ENCODE measurements at regions of chr4 and their contacts with region 1.

Region 1: GRCh38 chr4:159175085-159175988 is 72.5 kb downstream of the RAPGEF2 start:
- DNase-seq: peak; percentile 89
- ATAC-seq: peak; percentile 88
- H3K4me3 ChIP-seq: peak overlapping the region; percentile 66
- H3K27ac ChIP-seq: peak overlapping the region; percentile 65
- H3K4me1 ChIP-seq: peaks cover 30% of the 10 kb centered on the region
- H3K27me3 ChIP-seq: no peaks in the 10 kb centered on the region
- CTCF ChIP-seq: peak; percentile 86

Region 2: GRCh38 chr4:158729716-158730559 is 445.4 kb before region 1 on chr4:
- CTCF ChIA-PET with region 1: no interaction called
- POLR2A ChIA-PET with region 1: no interaction called
- intact Hi-C with region 1: loop called (anchors 1 kb)
- DNase-seq: peak; percentile 74
- ATAC-seq: peak; percentile 92
- H3K4me3 ChIP-seq: no peak overlapping the region
- H3K27ac ChIP-seq: no peak overlapping the region
- H3K4me1 ChIP-seq: no peaks in the 10 kb centered on the region
- H3K27me3 ChIP-seq: no peaks in the 10 kb centered on the region
- CTCF ChIP-seq: peak; percentile 87

Region 3: DNA sequence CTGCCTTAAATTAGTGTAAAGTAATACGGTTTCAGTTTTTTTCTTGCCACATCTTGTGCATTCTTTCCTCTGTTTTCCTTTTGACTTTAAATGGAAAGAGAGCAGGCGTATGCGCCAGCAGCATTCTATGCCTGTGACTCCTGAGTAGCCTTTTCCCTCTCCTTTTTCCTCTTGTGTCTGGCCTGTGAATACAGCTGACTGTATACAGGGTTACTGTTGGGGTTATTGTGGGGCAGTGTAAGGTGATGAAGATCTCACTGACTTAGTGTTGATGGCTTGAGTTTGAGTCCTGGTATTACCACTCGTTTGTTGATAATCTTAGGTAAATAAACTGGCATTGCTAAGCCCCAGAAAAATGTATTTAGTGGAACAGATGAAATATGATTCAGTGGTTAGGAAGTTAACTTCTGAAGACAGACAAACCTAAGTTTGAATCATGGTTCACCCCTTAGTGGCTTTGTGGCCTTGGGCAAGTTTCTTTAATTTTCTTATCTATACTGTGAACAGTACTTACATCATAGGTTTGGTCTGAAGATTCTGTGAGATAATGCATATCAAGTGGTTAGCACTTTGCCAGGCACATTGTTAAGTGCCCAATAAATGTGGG is 301.4 kb before region 1 on chr4:
- CTCF ChIA-PET with region 1: no interaction called
- POLR2A ChIA-PET with region 1: no interaction called
- intact Hi-C with region 1: loop called (anchors 5 kb)
- DNase-seq: peak; percentile 88
- ATAC-seq: peak; percentile 96
- H3K4me3 ChIP-seq: no peak overlapping the region
- H3K27ac ChIP-seq: peak overlapping the region; percentile 39; the same call in 1 of the 2 replicates
- H3K4me1 ChIP-seq: peaks cover 18% of the 10 kb centered on the region
- H3K27me3 ChIP-seq: no peaks in the 10 kb centered on the region
- CTCF ChIP-seq: no peak

Region 4: DNA sequence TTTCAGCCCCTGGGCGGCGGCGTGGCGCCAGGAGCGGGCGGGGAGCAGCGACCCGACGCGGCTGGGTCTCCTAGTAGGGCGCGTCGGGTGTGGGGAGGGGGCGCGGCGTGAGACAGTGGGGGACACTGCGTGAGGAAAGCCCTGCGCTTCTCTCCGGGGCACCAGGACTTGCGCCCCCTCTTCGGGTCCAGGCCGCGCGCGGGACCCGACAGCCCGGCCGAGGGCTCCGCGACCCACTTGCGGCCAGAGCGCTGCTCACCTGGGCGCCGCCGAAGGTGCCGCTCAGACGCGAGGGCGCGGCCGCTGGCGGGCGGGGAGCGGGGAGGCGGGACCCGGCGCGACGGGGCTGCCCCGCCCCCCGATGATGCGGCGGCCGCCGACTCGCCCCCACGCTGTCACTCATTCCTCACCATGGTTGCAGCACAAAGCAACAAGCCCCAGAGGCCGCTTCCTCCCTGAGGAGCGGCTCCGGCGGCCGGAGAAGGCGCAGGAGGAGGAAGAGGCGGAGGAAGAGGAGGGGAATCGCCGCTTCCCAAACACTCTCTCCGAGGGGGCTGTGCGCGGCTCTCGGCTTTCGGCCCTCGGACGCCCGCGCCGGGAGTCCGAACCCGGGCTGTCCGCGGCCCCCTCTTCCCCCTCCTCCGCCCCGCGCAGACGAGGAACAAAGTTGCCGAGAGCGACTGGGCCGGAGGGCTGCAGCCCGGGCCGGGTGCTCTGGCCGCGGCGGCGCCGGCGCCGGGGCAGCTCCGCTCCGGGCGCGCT is 72.5 kb before region 1 on chr4 and contains the start of gene RAPGEF2:
- CTCF ChIA-PET with region 1: no interaction called
- POLR2A ChIA-PET with region 1: no interaction called
- intact Hi-C with region 1: loop called (anchors 1 kb)
- DNase-seq: peak; percentile 91
- ATAC-seq: peak; percentile 84
- H3K4me3 ChIP-seq: peak within 1 kb of the TSS; percentile 91
- H3K27ac ChIP-seq: 0 out of 2 replicates have a peak within 1 kb of the TSS, but pooled peaks have one; percentile 10
- H3K4me1 ChIP-seq: peaks cover 33% of the 10 kb centered on the region
- H3K27me3 ChIP-seq: no peaks in the 10 kb centered on the region
- CTCF ChIP-seq: no peak
- total RNA-seq, gene RAPGEF2: 21.2 and 21.7 TPM in 2 replicates

Region 5: DNA sequence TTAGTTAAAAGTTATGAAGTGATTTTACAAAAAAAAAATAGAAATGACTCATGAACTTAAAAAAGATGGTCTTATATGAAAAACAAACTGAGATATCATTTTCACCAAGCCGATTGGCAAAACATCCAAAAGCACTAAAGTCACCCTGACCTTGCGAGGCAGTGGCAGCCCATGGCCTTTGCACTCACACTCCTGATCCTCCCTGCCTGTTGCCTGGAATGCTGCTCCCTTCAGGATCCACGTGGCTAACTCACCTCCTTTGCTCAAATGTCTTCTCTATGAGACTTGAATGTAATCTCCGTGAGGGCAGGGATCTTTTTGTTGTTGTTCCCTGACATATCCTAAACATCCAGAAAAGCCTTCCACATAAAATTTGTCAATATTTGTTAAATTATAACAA is 33.9 kb after region 1 on chr4:
- CTCF ChIA-PET with region 1: no interaction called
- POLR2A ChIA-PET with region 1: no interaction called
- intact Hi-C with region 1: no loop called
- DNase-seq: no peak
- ATAC-seq: no peak
- H3K4me3 ChIP-seq: no peak overlapping the region
- H3K27ac ChIP-seq: no peak overlapping the region
- H3K4me1 ChIP-seq: peaks cover 12% of the 10 kb centered on the region
- H3K27me3 ChIP-seq: no peaks in the 10 kb centered on the region
- CTCF ChIP-seq: no peak

Region 6: DNA sequence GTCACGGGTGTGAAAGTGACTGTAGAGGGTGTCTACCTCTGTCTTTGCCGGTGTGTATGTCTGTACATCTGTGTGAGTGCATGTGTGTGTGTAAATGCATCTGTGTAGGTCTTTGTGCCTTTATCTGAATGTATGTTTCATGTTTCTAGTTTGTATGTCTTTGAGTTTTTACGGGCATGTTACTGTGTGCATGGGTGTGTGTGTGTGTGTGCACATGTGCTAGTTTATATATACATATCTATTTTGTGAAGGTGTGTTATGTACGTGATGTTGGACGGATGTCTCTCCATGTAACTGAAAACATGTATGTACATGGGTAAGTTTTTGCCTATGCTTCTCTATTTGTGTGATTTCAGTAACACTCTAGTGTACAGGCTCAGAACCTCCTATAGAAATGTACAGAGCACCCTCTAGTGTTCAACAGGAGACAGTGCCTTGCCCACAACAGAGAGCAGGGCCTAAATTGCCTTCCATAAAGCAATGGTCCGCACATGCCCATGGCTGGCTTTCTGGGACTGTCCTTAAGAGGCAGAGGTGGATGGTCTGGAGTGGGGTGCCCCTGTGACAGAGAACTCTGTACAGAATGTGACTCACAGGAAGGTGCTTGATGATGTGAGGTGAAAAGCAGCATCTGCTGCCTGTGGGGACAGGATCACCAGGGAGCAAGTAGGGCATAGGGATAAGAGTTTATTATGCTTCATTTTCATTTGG is 271.1 kb after region 1 on chr4:
- CTCF ChIA-PET with region 1: no interaction called
- POLR2A ChIA-PET with region 1: no interaction called
- intact Hi-C with region 1: loop called (anchors 5 kb)
- DNase-seq: peak; percentile 80
- ATAC-seq: peak; percentile 100
- H3K4me3 ChIP-seq: no peak overlapping the region
- H3K27ac ChIP-seq: no peak overlapping the region
- H3K4me1 ChIP-seq: peaks cover 3% of the 10 kb centered on the region; the same call in 1 of the 2 replicates
- H3K27me3 ChIP-seq: no peaks in the 10 kb centered on the region
- CTCF ChIP-seq: peak; percentile 88

Measured in PC-3 (cell line).